H1 (cell line): ENCODE measurements at regions of chr18 and their contacts with region 1.

Region 1: DNA sequence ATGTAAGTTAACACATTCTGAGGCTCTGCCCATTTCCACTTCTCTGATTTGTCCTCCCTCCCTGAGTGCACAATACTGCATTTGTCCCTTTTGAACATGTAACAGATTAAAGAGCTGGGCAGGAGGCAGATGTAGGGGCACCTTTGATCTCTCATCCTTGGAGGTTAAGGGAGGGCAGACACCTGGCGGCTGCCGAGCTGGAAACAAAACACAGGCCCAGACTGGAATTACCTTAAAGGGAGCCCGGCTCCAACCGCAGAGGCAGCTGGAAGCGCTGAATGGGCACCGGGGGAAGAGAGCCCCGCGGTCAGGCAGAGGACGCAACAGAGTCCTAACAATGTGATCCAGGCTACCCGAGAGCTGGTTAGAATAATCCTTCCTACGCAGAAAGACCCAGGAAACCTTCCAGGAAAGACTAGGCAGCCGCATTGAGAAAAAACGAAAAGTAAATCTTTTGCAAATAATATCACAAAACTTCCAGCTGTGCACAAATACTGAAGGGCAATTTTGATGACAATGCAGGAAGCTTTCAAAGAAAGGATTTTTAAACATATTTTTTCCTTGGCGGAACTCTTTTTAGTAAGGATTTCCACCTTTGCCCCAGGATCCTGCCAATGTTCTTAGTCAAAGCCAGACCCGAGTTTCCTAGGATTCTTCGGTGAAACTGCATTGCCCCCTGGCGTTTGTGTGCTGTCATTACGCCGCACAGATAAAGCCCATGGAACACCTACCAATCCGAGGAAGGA is 216.0 kb downstream of the TGIF1 start:
- DNase-seq: peak; percentile 81 to 86
- H3K4me3 ChIP-seq: peak overlapping the region in 2 of 4 experiments; percentile 27 to 45; a peak in 3 of 8 replicates
- H3K27ac ChIP-seq: no peak overlapping the region; the same call in 1 of the 2 replicates
- H3K4me1 ChIP-seq: peaks cover 3 to 13% (median 9%) of the 10 kb centered on the region in 4 experiments; a peak in 6 of 7 replicates
- H3K27me3 ChIP-seq: no peaks in the 10 kb centered on the region
- CTCF ChIP-seq: peak; percentile 82 to 91 (median 86)
- EP300 ChIP-seq: no peak; a peak in 1 of 3 replicates
- POLR2A ChIP-seq: peak in 1 of 2 experiments; percentile 69; a peak in 2 of 3 replicates
- RAD21 ChIP-seq: peak; percentile 96 to 98

Region 2: DNA sequence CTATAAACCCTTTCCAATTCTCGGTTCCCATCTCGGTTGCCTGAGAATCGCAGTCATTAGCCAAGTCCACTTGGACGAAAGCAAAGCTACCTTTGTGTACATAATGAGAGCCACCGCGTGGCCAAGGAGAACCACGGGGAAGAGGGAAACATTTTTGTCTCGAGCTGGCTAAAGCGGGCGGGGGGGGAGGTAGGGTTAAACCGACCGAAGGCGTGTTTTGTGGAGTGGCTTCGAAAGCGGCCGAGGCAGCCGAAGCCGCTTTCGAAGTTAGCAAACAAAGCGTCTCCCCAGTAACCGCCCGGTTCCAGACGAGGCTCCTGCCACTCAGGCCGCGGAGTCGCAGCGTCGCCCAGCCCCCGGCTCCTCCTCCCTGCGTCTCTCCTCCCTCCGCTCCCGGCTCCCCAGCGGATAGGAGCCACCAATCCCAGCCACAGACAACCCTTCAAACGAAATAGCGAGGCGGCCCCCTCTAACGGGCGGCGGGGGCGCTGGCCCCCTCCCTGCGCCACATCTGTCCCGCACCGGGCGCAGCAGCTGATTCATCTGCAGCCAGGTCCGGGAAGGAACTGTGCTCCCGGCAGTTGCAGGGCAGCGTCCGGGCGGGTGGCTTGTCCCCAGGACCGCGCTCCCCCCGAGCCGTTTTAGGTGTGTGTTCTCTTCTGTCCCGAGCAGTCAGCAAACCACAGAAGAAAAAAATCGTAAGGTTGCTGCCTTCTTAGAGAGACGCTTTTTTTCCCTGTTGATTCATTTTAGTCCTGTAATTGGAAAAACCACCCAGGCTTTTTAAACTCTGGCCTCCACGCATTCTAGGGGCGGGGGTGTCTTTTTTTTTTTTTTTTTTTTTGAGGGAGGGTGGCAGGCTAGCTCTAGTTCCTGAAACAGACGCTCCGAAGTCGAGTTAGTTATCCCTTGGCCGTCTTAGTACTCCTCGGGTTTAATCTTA is 217.8 kb before region 1 on chr18:
- CTCF ChIA-PET with region 1: interaction called, 28 read pairs
- POLR2A ChIA-PET with region 1: interaction called, 15 read pairs
- DNase-seq: peak; percentile 89 to 92
- H3K4me3 ChIP-seq: peak overlapping the region; percentile 73 to 99 (median 87)
- H3K27ac ChIP-seq: peak overlapping the region; percentile 99
- H3K4me1 ChIP-seq: peaks cover 6 to 16% (median 11%) of the 10 kb centered on the region in 4 experiments
- H3K27me3 ChIP-seq: no peaks in the 10 kb centered on the region
- CTCF ChIP-seq: no peak
- EP300 ChIP-seq: peak; percentile 14 to 41; a peak in 1 of 3 replicates
- POLR2A ChIP-seq: peak; percentile 44 to 79; a peak in 2 of 3 replicates
- RAD21 ChIP-seq: no peak; a peak in 2 of 4 replicates

Region 3: DNA sequence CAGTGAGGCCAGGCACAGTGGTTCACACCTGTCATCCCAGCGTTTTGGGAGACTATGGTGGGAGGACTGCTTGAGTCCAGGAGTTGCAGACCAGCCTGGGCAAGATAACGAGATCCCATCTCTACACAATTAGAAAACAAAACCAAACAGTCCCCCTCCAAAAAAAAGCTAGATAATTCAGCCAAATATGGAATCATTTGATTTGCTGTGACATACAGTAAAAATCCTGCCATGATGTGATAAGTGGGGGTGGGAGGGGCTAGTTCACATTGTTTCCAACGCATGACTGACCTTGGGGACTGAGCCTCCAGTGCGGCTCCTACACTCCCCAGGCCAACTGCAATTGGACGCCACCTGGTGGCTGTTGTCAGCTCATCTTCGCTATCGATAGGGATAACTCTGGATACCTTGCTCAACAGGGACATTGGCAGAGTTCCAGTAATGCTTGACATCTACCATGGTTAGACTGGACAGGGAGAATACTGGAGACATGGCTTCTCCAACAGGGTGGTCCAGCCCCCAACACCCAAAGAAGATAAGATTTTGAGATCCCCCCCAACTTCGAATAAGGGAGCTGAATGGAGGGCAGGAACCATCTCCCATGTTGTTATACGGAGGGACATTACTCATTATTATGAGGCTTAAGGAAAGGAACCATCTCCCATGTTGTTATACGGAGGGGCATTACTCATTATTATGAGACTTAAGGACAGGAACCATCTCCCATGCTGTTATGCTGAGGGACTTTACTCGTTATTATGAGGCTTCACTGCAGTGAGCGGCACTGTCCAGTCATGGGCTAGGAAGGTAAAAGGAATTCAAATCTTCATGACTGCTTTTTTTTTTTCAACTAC is 80.1 kb before region 1 on chr18:
- CTCF ChIA-PET with region 1: interaction called, 38 read pairs
- POLR2A ChIA-PET with region 1: interaction called, 3 read pairs
- DNase-seq: peak; percentile 63 to 84
- H3K4me3 ChIP-seq: no peak overlapping the region
- H3K27ac ChIP-seq: no peak overlapping the region
- H3K4me1 ChIP-seq: peaks cover 3 to 13% (median 9%) of the 10 kb centered on the region in 4 experiments
- H3K27me3 ChIP-seq: no peaks in the 10 kb centered on the region
- CTCF ChIP-seq: peak; percentile 86 to 96 (median 91)
- EP300 ChIP-seq: no peak
- POLR2A ChIP-seq: no peak
- RAD21 ChIP-seq: peak; percentile 88 to 92

Region 4: DNA sequence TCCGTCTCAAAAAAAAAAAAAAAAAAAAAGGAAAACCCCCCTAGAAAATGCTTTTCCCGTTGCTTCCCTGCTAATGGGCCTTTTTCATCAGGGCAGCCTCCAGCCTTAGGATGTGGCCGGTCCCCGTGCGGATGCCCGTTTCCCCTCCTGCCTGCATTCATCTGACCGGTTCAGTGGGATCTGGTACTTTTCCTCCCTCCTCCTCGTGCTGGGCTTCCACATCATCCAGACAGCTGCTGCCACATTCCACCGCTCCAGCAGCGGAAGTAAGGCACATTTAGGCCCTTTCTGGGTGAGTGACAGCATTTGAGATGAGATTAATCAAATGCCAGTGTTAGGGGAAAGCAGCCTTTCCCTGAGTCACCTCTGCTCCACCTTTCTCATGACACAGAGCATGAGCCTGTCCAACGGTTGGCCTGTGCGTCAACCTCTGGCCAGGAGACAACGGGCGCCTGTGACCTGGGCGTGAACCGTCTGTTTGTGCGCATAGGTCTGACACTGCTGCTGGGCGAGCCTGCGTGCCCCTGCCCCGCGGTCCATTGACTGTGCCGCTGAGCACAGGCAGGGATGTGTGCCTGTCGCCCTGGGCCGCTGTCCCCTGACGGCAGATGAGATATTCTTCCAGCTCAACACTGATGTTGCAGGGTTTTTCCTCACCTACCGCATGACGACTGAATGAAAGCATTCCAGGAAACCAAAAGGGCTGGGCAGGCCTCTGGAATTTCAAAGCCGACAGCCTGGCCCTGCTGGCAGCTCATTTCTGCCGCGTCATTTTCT is 42.0 kb before region 1 on chr18:
- CTCF ChIA-PET with region 1: interaction called, 29 read pairs
- POLR2A ChIA-PET with region 1: interaction called, 5 read pairs
- DNase-seq: peak in 1 of 2 experiments; percentile 65
- H3K4me3 ChIP-seq: no peak overlapping the region
- H3K27ac ChIP-seq: peak overlapping the region; percentile 48; the same call in 1 of the 2 replicates
- H3K4me1 ChIP-seq: peaks cover 9 to 21% (median 11%) of the 10 kb centered on the region in 4 experiments
- H3K27me3 ChIP-seq: no peaks in the 10 kb centered on the region
- CTCF ChIP-seq: no peak
- EP300 ChIP-seq: no peak
- POLR2A ChIP-seq: no peak
- RAD21 ChIP-seq: no peak

Region 5: DNA sequence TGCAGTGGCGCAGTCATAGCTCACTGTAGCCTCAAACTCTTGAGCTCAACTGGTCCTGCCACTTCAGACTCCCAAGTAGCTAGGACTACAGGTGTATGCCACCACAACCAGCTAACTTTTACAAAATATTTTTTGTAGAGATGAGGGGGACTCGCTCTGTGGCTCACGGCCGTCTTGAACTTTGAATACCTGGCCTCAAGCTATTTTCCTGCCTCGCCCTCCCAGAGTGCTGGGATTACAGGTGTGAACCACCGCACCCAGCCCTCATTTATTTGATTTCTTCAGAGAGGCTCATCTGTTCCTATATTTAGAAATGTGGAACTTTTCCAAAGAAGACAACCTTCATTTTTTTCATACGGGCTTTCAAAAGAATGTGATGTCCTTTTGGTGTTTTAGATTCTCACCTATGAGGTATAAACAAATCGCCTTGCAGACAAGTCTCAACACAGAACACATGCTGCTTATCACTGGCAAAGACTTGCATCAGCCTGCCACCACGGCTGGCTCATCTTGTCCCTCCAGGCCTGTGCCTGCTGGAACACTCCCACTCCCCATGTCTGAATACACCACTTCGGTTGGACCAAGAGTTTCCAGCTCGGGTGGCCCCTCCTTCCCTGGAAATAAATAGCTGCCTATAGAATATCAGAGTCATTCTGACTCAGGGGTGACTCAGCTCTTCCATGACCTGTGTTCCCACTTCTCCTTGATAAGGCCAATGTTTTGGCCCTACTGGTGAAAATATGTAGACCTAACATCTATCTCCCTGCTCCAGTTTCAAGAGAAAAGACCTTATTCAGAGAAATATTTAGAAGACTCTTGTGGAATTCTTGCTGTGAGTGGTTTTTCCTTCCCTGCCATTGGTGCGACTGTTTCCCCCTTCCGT is 13.3 kb before region 1 on chr18:
- CTCF ChIA-PET with region 1: interaction called, 16 read pairs
- POLR2A ChIA-PET with region 1: interaction called, 6 read pairs
- DNase-seq: peak in 1 of 2 experiments; percentile 51
- H3K4me3 ChIP-seq: no peak overlapping the region
- H3K27ac ChIP-seq: no peak overlapping the region
- H3K4me1 ChIP-seq: peaks cover 0 to 9% (median 4%) of the 10 kb centered on the region in 4 experiments; a peak in 6 of 7 replicates
- H3K27me3 ChIP-seq: no peaks in the 10 kb centered on the region
- CTCF ChIP-seq: no peak
- EP300 ChIP-seq: no peak
- POLR2A ChIP-seq: no peak
- RAD21 ChIP-seq: no peak

Region 6: DNA sequence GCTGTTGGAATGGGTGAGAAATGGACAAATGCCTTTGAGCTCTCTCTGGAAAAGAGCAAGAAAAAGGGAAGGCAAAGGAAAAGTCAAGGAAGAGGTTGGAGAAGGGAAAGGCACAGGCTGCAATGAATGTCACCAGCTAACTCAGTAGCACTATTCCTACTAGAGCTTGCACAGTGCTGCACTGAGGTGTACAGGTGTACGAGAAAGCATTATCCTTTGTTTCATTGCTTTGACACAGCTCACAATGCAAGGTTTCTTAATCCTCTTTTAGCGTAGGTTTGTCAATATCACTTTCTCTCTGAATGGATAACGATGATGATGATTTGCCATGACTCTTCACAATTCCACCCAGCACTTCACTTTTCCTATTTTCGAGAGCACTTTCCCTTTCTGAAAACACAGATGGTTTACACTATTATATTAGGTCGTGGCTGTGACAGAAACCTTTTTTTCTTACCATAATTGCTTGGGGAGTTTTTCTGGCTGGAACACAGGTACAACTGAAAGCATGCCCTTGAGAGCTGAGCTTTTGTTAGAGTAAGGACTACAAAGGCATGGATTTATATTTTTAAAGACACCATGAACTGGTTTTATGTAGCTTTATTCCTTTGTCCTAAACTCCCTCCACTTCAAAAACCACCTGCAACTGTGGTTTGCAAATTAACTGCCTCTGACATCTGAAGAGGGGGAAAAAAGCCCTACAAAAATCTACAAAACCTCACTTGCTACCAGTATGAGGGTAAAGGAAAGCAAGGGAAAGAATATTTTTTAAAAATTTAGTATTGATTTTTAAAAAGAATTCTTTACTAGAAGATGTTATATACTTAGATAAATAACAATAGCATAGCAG is 49.5 kb after region 1 on chr18:
- CTCF ChIA-PET with region 1: no interaction called
- POLR2A ChIA-PET with region 1: no interaction called
- DNase-seq: no peak
- H3K4me3 ChIP-seq: no peak overlapping the region
- H3K27ac ChIP-seq: no peak overlapping the region
- H3K4me1 ChIP-seq: no peaks in the 10 kb centered on the region
- H3K27me3 ChIP-seq: no peaks in the 10 kb centered on the region
- CTCF ChIP-seq: no peak
- EP300 ChIP-seq: no peak
- POLR2A ChIP-seq: no peak
- RAD21 ChIP-seq: no peak